Endothelial cell of umbilical vein (primary cell): ENCODE measurements at regions of chr6 and their contacts with region 1.

Region 1: GRCh38 chr6:53348371-53349208 is at the start of gene ELOVL5:
- DNase-seq: peak; percentile 98
- H3K4me3 ChIP-seq: peak within 1 kb of the TSS; percentile 87 to 97 (median 88)
- H3K27ac ChIP-seq: peak within 1 kb of the TSS; percentile 96
- H3K4me1 ChIP-seq: peaks cover 12% of the 10 kb centered on the region
- H3K27me3 ChIP-seq: peaks cover 5 to 14% of the 10 kb centered on the region in 2 experiments
- CTCF ChIP-seq: no peak
- POLR2A ChIP-seq: no peak
- total RNA-seq, gene ELOVL5: 140 and 149 TPM in 2 replicates

Region 2: GRCh38 chr6:53263917-53264316 is 84.7 kb before region 1 on chr6:
- CTCF ChIA-PET with region 1: interaction called, 3 read pairs
- POLR2A ChIA-PET with region 1: no interaction called
- dilution Hi-C with region 1: no loop called
- intact Hi-C with region 1: loop called (anchors 2 kb)
- DNase-seq: no peak
- H3K4me3 ChIP-seq: no peak overlapping the region
- H3K27ac ChIP-seq: no peak overlapping the region
- H3K4me1 ChIP-seq: no peaks in the 10 kb centered on the region
- H3K27me3 ChIP-seq: no peaks in the 10 kb centered on the region
- CTCF ChIP-seq: no peak
- POLR2A ChIP-seq: no peak

Region 3: GRCh38 chr6:53294095-53294494 is 54.5 kb before region 1 on chr6:
- CTCF ChIA-PET with region 1: interaction called, 13 read pairs
- POLR2A ChIA-PET with region 1: no interaction called
- dilution Hi-C with region 1: no loop called
- intact Hi-C with region 1: no loop called
- DNase-seq: peak; percentile 44
- H3K4me3 ChIP-seq: no peak overlapping the region
- H3K27ac ChIP-seq: no peak overlapping the region
- H3K4me1 ChIP-seq: peaks cover 14% of the 10 kb centered on the region
- H3K27me3 ChIP-seq: no peaks in the 10 kb centered on the region
- CTCF ChIP-seq: peak; percentile 67 to 77
- POLR2A ChIP-seq: no peak

Region 4: DNA sequence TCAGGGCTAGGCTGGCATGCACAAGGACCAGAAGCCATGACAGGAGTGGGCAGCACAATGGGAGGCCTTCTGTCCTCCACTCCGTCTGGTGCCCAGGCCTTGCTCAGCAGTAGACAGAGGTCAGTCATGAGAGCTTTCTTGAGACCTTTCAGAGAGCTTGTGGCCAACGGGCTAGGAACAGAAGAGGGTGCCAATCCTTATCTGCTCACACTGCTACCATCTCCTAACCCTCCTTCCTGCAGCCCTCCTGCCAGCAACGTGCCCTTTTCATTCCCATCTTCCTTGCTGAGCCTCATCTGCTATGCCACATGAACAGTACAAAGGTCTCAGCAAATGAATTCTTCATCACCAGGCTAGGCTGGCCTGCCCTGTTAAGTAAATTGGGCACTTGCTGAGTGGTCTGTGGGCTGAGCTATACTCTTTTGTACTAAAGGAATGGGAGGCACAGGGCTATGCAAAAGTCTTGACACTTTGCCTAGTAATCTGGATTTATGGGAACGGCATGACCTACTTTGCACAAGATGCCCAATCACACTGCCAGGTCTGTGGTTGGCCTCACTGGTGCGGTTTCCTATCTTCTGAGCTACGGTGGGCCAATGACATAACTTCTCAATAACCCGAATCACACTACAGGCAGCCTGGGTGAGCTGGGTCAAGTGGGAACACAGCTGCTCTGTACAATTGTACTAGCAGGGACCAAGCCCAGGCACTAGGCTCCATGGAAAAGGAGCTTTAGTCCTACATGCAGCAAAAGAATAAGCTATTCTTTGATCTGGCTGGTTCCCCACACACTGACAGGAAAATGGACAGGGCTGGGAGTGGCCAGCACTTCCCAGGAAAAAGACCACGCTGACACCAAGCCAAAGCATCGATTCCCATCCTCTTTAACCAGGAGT is 47.7 kb before region 1 on chr6:
- CTCF ChIA-PET with region 1: interaction called, 11 read pairs
- POLR2A ChIA-PET with region 1: interaction called, 23 read pairs
- dilution Hi-C with region 1: no loop called
- intact Hi-C with region 1: loop called (anchors 1 kb)
- DNase-seq: peak; percentile 53
- H3K4me3 ChIP-seq: no peak overlapping the region
- H3K27ac ChIP-seq: peak overlapping the region; percentile 99
- H3K4me1 ChIP-seq: peaks cover 58% of the 10 kb centered on the region
- H3K27me3 ChIP-seq: no peaks in the 10 kb centered on the region
- CTCF ChIP-seq: no peak
- POLR2A ChIP-seq: no peak

Region 5: DNA sequence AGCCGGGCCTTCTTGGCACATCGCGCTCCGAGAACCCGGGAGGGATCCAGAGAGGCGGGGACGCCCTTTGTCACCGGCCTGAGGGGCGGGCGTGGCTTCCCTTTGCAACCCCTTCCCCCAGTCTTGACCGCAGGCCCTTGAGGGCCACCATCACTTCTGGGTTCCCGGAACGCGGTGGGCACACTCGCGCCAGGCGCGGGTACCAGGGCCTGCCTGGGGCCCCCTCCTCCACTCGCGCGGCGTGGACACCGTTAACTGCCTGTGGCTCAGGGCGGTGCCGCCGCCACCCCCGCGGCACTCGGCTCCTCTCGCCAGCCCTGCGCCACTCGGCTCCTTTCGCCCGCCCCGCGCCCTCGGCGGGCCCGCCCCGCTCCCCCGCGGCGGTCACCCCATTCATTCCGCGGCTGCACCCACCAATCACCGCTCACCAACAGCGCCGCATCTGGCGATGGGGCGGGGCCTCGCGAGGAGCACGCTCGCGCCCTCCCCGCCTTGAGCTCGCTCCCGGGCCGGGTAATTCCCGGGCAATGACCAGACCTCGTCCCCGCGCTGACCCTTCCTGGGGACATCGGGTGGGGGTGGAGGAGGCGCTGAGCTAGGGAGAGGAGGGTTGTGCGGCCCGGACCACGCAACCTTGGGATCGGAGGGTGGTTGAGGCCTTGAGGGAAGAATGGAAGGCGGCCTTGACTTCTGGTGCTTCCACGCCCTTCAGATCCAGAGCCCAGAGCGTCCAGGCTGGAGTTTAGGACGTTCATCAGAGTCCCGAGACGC is 10.7 kb after region 1 on chr6:
- CTCF ChIA-PET with region 1: interaction called, 7 read pairs
- POLR2A ChIA-PET with region 1: interaction called, 11 read pairs
- dilution Hi-C with region 1: no loop called
- intact Hi-C with region 1: loop called (anchors 1 kb)
- DNase-seq: peak; percentile 97
- H3K4me3 ChIP-seq: peak overlapping the region in 2 of 3 experiments; percentile 46 to 63
- H3K27ac ChIP-seq: peak overlapping the region; percentile 78
- H3K4me1 ChIP-seq: peaks cover 31% of the 10 kb centered on the region
- H3K27me3 ChIP-seq: peaks cover 0 to 3% of the 10 kb centered on the region in 2 experiments
- CTCF ChIP-seq: no peak
- POLR2A ChIP-seq: peak; percentile 46

Region 6: DNA sequence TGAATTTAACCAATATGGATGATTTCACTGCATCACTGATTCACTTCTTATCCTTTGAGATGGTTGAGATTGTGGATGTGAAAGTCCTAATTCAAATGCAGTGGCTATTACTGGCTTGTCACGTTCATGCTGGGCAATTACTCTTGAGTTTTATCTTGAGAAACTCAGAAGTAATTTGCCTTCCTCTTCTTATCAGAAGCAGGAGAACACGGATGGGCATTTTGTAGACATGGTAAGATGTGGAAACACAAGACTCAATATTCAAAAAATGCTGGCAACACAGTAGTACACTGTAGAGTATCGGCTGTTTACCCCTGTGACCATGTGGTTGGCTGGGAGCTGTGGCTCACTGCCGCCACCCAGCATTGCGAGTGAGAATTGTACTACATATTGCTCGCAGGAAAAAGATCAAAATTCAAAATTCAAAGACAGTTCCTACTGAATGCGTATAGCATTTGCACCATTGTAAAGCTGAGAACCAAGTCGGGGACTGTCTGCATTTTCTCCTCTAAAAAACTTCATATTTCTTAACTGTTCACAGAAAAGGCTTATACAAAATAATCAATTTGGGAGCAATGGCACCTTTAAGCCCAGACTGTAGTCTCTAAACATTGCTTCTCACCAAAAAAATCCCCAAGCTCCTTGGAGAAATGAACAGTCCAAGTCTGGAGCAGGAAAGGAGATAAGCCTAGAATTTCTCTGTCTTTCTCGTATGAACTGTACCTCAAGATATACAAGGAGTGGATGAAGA is 62.1 kb after region 1 on chr6:
- CTCF ChIA-PET with region 1: interaction called, 6 read pairs
- POLR2A ChIA-PET with region 1: no interaction called
- dilution Hi-C with region 1: no loop called
- intact Hi-C with region 1: loop called (anchors 2 kb)
- DNase-seq: peak; percentile 56
- H3K4me3 ChIP-seq: no peak overlapping the region
- H3K27ac ChIP-seq: no peak overlapping the region
- H3K4me1 ChIP-seq: no peaks in the 10 kb centered on the region
- H3K27me3 ChIP-seq: peaks cover 9 to 16% of the 10 kb centered on the region in 2 experiments
- CTCF ChIP-seq: peak; percentile 55 to 61
- POLR2A ChIP-seq: no peak